ENCODE measurements at regions of chr7 and their contacts with region 1.

Region 1: GRCh38 chr7:92042056-92042737 is 92.1 kb downstream of the CYP51A1 start:
- DNase-seq: no peak
- H3K4me3 ChIP-seq: no peak overlapping the region
- H3K27ac ChIP-seq: no peak overlapping the region
- H3K4me1 ChIP-seq: peaks cover 0 to 13% (median 10%) of the 10 kb centered on the region in 4 donors
- H3K27me3 ChIP-seq: no peaks in the 10 kb centered on the region
- CTCF ChIP-seq: no peak
- EP300 ChIP-seq: no peak
- POLR2A ChIP-seq: no peak

Region 2: GRCh38 chr7:90931986-90932916 is 1109.9 kb before region 1 on chr7:
- intact Hi-C with region 1: no loop called
- DNase-seq: no peak
- H3K4me3 ChIP-seq: no peak overlapping the region
- H3K27ac ChIP-seq: no peak overlapping the region
- H3K4me1 ChIP-seq: no peaks in the 10 kb centered on the region
- H3K27me3 ChIP-seq: no peaks in the 10 kb centered on the region
- CTCF ChIP-seq: no peak
- EP300 ChIP-seq: no peak
- POLR2A ChIP-seq: no peak

Region 3: GRCh38 chr7:92057362-92057761 is 15.2 kb after region 1 on chr7:
- intact Hi-C with region 1: no loop called
- DNase-seq: no peak
- H3K4me3 ChIP-seq: no peak overlapping the region
- H3K27ac ChIP-seq: peak overlapping the region in 1 of 4 donors; percentile 25
- H3K4me1 ChIP-seq: peaks cover 0 to 8% (median 4%) of the 10 kb centered on the region in 4 donors
- H3K27me3 ChIP-seq: no peaks in the 10 kb centered on the region
- CTCF ChIP-seq: no peak
- EP300 ChIP-seq: no peak
- POLR2A ChIP-seq: no peak

Region 4: DNA sequence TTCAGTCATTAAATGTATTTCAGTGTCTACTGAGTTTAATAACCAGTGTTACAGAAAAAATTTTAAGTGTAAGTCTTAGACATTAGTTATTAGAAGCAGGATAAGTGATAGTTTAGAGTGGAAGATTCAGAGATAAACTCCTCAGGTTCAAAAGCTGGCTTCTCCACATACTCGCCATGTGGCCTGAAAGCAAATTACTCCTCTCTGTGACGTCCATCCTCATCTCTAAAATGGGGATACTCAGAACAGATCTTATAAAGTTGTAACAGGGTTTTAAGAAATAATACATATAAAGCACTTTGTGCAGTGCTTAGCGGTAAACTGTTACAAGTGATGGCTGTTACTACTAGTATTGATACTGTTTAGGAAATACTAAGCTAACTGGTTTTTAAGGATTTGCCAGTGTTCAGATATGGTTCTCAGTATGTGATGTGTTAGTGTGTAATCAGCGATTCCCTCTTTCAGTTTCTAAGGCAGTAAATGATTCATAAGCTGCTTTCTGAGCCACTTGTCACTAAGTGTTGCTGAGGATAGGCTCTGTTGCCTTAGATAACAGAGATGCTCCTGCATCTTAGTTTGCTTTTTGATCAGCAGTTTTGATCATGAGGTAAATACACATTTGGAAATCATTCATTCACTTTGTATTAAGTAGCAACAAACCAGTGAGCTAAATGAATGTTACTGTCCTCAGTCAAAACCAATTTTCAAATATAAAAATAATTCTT is 33.4 kb after region 1 on chr7:
- intact Hi-C with region 1: loop called (anchors 5 kb)
- DNase-seq: no peak
- H3K4me3 ChIP-seq: no peak overlapping the region
- H3K27ac ChIP-seq: no peak overlapping the region
- H3K4me1 ChIP-seq: no peaks in the 10 kb centered on the region
- H3K27me3 ChIP-seq: no peaks in the 10 kb centered on the region
- CTCF ChIP-seq: no peak
- EP300 ChIP-seq: no peak
- POLR2A ChIP-seq: no peak

Region 5: GRCh38 chr7:92150450-92151017 is 108.3 kb after region 1 on chr7:
- intact Hi-C with region 1: no loop called
- DNase-seq: no peak
- H3K4me3 ChIP-seq: no peak overlapping the region
- H3K27ac ChIP-seq: no peak overlapping the region
- H3K4me1 ChIP-seq: no peaks in the 10 kb centered on the region
- H3K27me3 ChIP-seq: no peaks in the 10 kb centered on the region
- CTCF ChIP-seq: no peak
- EP300 ChIP-seq: no peak
- POLR2A ChIP-seq: no peak